ENCODE measurements at regions of chr11 and their contacts with region 1.

Region 1: DNA sequence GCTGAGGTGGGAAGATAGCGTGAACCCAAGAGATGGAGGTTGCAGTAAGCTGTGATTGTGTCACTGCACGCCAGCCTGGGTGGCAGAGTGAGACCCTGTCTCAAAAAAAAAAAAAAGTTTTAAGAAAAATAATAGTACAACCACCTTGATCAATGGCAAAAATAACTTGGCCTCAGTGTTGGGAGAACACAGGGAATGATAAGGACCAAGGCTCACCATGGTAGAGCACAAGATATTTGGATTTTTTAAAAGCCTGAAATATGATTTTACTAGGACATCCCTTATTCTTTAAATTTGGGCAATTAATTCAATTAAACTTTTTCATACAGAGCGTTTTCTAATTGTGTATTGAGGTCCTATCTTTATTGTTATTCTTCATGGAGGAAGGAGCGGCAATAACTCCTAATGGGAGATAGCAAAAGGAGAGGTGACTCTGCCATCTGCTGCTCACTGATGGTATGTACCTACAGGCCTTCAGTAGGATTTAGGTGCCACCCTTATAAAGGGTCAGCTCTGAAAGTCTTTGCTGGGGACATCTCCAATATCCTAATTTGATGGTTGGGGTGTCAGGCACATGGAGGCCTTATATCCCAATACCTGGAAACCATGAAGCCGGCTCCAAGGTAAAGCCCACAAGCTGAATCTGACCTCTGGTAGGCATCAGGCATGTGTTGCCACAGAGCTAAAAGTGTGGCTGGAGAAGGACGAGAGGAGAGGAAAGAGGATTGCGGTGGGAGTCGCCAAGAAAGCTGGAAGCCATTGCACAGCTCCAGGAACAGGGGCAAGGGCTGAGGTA is 21.9 kb upstream of the POLD3 start:
- DNase-seq: peak; percentile 35
- H3K4me3 ChIP-seq: no peak overlapping the region
- H3K27ac ChIP-seq: no peak overlapping the region
- H3K4me1 ChIP-seq: no peaks in the 10 kb centered on the region
- H3K27me3 ChIP-seq: no peaks in the 10 kb centered on the region
- CTCF ChIP-seq: peak; percentile 78 to 82

Region 2: DNA sequence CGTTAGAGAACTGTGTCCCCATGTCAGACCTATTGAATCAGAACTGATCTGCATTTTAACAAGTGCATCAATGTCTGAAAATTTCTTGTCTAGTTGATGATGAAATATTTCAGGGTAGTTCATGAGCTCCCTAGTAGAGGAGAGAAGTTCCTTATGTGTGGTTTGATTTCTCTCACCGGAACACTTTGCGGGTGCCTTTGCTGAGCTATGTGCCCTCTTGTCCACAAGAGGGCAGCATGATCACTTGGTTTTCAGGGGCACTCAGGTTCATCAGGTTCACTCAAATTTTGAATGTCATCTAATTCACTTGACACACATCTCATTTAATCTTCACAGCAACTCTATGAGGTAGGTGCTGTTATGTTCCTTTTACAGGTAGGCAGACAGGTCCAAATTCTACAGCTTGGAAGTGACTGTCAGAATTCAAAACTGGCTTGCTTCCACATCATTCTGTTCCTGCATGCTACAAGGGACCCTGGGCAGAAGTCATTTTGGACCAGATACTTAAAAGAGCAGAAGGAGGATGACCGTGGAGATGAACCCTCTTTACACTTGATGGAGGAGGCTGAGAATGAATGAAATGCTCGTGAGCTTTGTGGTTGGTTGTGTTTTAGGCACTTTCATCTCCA is 314.6 kb before region 1 on chr11:
- CTCF ChIA-PET with region 1: no interaction called
- dilution Hi-C with region 1: loop called (anchors 25 kb)
- in situ Hi-C with region 1: loop called (anchors 10 kb)
- intact Hi-C with region 1: loop called (anchors 1 kb)
- DNase-seq: peak; percentile 50
- H3K4me3 ChIP-seq: no peak overlapping the region
- H3K27ac ChIP-seq: no peak overlapping the region
- H3K4me1 ChIP-seq: no peaks in the 10 kb centered on the region
- H3K27me3 ChIP-seq: no peaks in the 10 kb centered on the region
- CTCF ChIP-seq: peak; percentile 91 to 92

Region 3: DNA sequence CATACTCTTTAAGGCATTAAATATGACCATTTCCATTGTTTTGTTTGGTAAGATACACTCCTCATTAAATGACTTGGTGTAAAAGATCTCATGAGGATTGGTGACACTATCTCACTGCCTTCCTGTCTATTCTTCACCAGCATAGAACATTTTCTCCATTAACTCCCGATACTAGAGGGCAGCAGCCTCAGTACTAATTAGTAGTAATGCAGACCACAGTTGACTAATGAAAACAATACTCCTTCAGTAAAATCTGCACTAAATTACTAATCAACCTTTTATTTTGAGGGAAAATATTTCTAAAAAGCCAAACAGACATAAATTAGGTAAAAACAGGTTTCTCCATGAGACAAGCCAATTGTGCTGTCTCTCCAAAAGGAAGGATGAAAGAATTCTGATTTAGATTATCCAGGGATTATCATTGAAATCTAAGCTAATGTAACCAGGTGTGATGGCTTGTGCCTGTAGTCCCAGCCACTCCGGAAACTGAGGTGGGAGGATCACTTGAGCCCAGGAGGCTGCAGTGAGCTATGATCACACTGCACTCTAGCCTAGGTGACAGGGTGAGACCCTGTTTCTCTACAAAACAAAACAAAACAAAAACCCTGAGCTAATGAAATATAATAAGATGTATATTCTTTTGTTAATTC is 181.7 kb before region 1 on chr11:
- CTCF ChIA-PET with region 1: no interaction called
- dilution Hi-C with region 1: no loop called
- in situ Hi-C with region 1: no loop called
- intact Hi-C with region 1: loop called (anchors 2 kb)
- DNase-seq: peak; percentile 51
- H3K4me3 ChIP-seq: no peak overlapping the region
- H3K27ac ChIP-seq: no peak overlapping the region
- H3K4me1 ChIP-seq: peaks cover 4% of the 10 kb centered on the region
- H3K27me3 ChIP-seq: no peaks in the 10 kb centered on the region
- CTCF ChIP-seq: peak; percentile 67 to 80

Region 4: DNA sequence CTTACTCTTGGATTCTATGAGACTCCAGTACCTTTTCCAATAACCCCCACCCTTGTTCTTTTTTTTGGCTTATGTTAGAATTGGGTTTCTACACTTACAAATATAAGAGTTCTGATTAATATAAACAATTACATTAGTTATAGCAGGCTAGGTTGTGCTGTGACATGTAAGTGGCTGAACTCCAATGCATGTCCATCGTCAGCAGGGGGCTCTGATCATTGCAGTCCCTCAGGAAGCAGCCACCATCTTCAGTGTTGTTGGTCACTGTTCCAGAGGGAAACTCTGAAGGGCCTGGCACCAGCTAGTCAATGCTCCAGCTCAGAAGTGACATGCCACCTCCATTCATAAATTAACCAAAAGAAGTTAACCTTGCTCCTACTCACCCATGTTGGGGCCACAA is 82.6 kb before region 1 on chr11:
- CTCF ChIA-PET with region 1: no interaction called
- dilution Hi-C with region 1: no loop called
- in situ Hi-C with region 1: no loop called
- intact Hi-C with region 1: loop called (anchors 1 kb)
- DNase-seq: no peak
- H3K4me3 ChIP-seq: no peak overlapping the region
- H3K27ac ChIP-seq: no peak overlapping the region
- H3K4me1 ChIP-seq: peaks cover 8% of the 10 kb centered on the region
- H3K27me3 ChIP-seq: no peaks in the 10 kb centered on the region
- CTCF ChIP-seq: peak in 1 of 2 donors; percentile 18

Measured in mammary epithelial cell (primary cell).